ENCODE measurements at regions of chr3 and their contacts with region 1.

Region 1: GRCh38 chr3:150408221-150409102 is at the start of gene TSC22D2:
- DNase-seq: peak; percentile 96 to 98 (median 97)
- H3K4me3 ChIP-seq: peak within 1 kb of the TSS; percentile 79 to 93
- H3K4me3 Mint-ChIP-seq: peak within 1 kb of the TSS; percentile 85 to 98 (median 89)
- H3K27ac ChIP-seq: peak within 1 kb of the TSS; percentile 95
- H3K27ac Mint-ChIP-seq: peak within 1 kb of the TSS; percentile 89 to 99 (median 98)
- H3K4me1 ChIP-seq: peaks cover 34% of the 10 kb centered on the region
- H3K4me1 Mint-ChIP-seq: peaks cover 23 to 36% (median 30%) of the 10 kb centered on the region in 4 donors
- H3K27me3 ChIP-seq: no peaks in the 10 kb centered on the region
- H3K27me3 Mint-ChIP-seq: no peaks in the 10 kb centered on the region
- total RNA-seq, gene TSC22D2: 25.3 to 25.7 TPM

Region 2: GRCh38 chr3:149752051-149752787 is 656.2 kb before region 1 on chr3 and contains the start of gene COMMD2:
- CTCF ChIA-PET with region 1: no interaction called
- POLR2A ChIA-PET with region 1: interaction called, 10 read pairs
- intact Hi-C with region 1: loop called (anchors 10 kb)
- DNase-seq: peak; percentile 67 to 71 (median 69)
- H3K4me3 ChIP-seq: peak within 1 kb of the TSS; percentile 42 to 85
- H3K4me3 Mint-ChIP-seq: peak within 1 kb of the TSS; percentile 94 to 98 (median 97)
- H3K27ac ChIP-seq: peak within 1 kb of the TSS; percentile 70
- H3K27ac Mint-ChIP-seq: peak within 1 kb of the TSS; percentile 86 to 98 (median 95)
- H3K4me1 ChIP-seq: peaks cover 28% of the 10 kb centered on the region
- H3K4me1 Mint-ChIP-seq: peaks cover 17 to 55% (median 33%) of the 10 kb centered on the region in 4 donors
- H3K27me3 ChIP-seq: no peaks in the 10 kb centered on the region
- H3K27me3 Mint-ChIP-seq: no peaks in the 10 kb centered on the region
- total RNA-seq, gene COMMD2: 38.0 to 44.7 TPM

Region 3: DNA sequence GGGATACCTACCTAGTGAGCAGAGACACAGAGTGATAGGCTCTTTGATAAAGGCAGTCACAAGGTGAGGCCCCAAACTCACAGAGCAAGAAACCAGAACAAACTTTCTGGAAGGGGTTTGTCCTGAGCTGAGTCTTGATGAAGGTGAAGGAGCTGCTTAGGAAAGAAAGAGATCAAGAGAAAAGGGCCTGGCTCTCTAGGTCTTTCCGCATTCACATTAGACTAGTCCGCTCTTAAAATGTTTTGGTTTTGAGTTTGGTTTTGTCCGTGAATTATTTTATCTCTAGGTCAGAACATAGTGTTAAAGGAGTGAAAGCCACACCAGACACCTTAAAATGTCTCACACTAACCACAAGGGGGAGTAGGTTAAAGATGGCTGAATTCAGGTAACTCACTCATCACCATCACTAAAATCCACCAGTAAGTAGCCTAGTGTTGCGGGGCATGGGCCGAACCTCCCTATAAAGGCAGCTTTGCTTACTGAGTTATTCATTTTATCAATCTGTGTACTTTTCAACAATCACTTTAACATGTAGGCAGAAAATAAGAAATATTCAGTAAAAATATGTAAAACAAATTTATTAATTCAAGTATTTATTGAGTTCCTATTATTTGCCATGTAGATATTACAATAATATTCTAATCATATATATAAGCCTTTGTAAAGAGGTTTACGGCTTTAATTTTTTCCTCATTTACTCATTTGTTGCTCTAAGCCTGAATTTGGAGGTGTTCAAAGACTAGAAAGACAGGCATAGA is 121.9 kb before region 1 on chr3:
- CTCF ChIA-PET with region 1: interaction called, 4 read pairs
- POLR2A ChIA-PET with region 1: interaction called, 4 read pairs
- intact Hi-C with region 1: loop called (anchors 2 kb)
- DNase-seq: peak; percentile 45 to 50 (median 48)
- H3K4me3 ChIP-seq: no peak overlapping the region
- H3K4me3 Mint-ChIP-seq: no peak overlapping the region
- H3K27ac ChIP-seq: no peak overlapping the region
- H3K27ac Mint-ChIP-seq: no peak overlapping the region
- H3K4me1 ChIP-seq: no peaks in the 10 kb centered on the region
- H3K4me1 Mint-ChIP-seq: peaks cover 0 to 1% (median 0%) of the 10 kb centered on the region in 4 donors
- H3K27me3 ChIP-seq: peaks cover 5% of the 10 kb centered on the region
- H3K27me3 Mint-ChIP-seq: peaks cover 8 to 20% of the 10 kb centered on the region in 2 donors

Region 4: DNA sequence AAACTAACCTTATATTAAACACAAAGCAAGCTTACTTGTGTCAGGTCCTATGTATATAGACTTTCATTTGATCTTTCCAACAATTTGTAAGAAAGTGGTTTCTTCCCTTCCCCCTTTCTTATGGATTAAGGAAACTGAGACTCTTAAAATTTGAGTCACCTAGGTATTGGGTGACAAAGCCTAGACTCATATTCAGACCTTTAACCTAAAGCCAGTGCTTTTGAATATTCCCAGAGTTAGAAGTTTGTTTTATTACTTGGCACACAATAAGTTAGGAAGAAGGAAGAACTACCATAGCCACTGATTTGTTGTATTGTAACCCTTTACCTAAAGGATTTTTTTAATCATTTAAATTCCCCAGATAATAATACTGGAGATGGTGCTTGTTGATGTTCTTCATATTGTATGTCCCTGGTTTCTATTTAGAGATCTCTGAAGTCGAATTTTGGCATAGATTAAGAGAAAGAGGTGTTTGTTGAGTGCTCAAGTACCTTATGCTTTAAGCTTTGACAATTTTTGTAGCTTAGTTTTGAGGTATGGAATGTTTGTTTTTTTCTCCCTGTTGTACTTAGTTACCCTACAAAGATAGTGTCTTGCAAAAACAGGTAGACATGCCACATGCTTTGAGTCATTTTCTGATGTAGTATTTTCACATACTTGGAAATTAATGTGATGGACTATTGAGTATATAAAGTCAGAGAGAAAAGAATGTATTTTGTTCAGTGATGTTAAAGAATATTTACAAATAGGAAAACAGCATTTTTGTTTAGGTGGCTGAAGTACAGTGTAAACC is 10.8 kb after region 1 on chr3:
- CTCF ChIA-PET with region 1: interaction called, 7 read pairs
- POLR2A ChIA-PET with region 1: interaction called, 24 read pairs
- intact Hi-C with region 1: loop called (anchors 1 kb)
- DNase-seq: no peak
- H3K4me3 ChIP-seq: no peak overlapping the region
- H3K4me3 Mint-ChIP-seq: peak overlapping the region in 3 of 8 donors; percentile 13 to 51 (median 16)
- H3K27ac ChIP-seq: no peak overlapping the region
- H3K27ac Mint-ChIP-seq: no peak overlapping the region
- H3K4me1 ChIP-seq: peaks cover 69% of the 10 kb centered on the region
- H3K4me1 Mint-ChIP-seq: peaks cover 50 to 75% (median 65%) of the 10 kb centered on the region in 4 donors
- H3K27me3 ChIP-seq: no peaks in the 10 kb centered on the region
- H3K27me3 Mint-ChIP-seq: no peaks in the 10 kb centered on the region

Region 5: DNA sequence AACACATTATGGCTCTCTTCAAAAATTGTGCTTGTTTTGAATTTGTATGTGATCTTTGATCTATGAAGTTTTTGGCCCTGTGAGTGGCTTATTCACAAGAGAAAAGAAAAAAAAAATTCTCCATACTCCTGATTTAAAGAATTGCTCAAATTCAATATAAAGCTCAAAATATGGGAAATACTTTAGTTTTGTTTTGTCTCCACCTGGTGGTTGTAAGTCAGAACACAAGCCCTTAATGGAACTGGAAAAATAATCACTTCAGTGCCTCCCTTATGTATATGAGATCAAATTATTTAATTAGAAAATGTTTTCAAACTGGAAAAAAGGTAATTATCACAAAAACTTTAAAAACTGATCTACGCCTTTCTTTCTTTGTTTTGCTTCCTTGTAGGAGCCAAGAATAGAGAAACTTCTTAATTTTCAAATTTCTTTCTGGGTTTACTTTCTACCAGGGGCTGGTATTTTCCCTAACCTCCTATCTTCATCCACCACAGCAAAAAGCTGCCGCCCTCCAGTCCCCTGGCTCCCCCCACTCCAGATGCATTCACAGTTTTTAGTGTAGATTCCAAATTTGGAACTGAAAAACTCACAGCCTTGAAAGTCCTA is 87.2 kb after region 1 on chr3:
- CTCF ChIA-PET with region 1: interaction called, 27 read pairs
- POLR2A ChIA-PET with region 1: interaction called, 13 read pairs
- intact Hi-C with region 1: loop called (anchors 1 kb)
- DNase-seq: peak in 4 of 5 donors; percentile 36 to 46 (median 44)
- H3K4me3 ChIP-seq: no peak overlapping the region
- H3K4me3 Mint-ChIP-seq: no peak overlapping the region
- H3K27ac ChIP-seq: no peak overlapping the region
- H3K27ac Mint-ChIP-seq: no peak overlapping the region
- H3K4me1 ChIP-seq: no peaks in the 10 kb centered on the region
- H3K4me1 Mint-ChIP-seq: no peaks in the 10 kb centered on the region
- H3K27me3 ChIP-seq: no peaks in the 10 kb centered on the region
- H3K27me3 Mint-ChIP-seq: peaks cover 0 to 1% of the 10 kb centered on the region in 2 donors

Region 6: GRCh38 chr3:150703299-150704134 is 295.1 kb after region 1 on chr3 and contains the start of gene ERICH6:
- CTCF ChIA-PET with region 1: no interaction called
- POLR2A ChIA-PET with region 1: interaction called, 16 read pairs
- intact Hi-C with region 1: loop called (anchors 1 kb)
- DNase-seq: peak; percentile 75 to 84 (median 82)
- H3K4me3 ChIP-seq: peak within 1 kb of the TSS; percentile 78 to 88
- H3K4me3 Mint-ChIP-seq: peak within 1 kb of the TSS; percentile 92 to 99 (median 96)
- H3K27ac ChIP-seq: peak within 1 kb of the TSS; percentile 82
- H3K27ac Mint-ChIP-seq: peak within 1 kb of the TSS; percentile 94 to 99 (median 98)
- H3K4me1 ChIP-seq: peaks cover 14% of the 10 kb centered on the region
- H3K4me1 Mint-ChIP-seq: peaks cover 11 to 30% (median 19%) of the 10 kb centered on the region in 4 donors
- H3K27me3 ChIP-seq: no peaks in the 10 kb centered on the region
- H3K27me3 Mint-ChIP-seq: no peaks in the 10 kb centered on the region
- total RNA-seq, gene ERICH6: not detected